Activated CD4-positive, alpha-beta T cell treated with anti-CD3 and anti-CD28 coated beads for 36 hours (primary cell): ENCODE measurements at regions of chr22 and their contacts with region 1.

Region 1: GRCh38 chr22:30289134-30289979 is at the start of gene CASTOR1:
- DNase-seq: peak; percentile 93
- ATAC-seq: peak; percentile 88
- H3K4me3 Mint-ChIP-seq: peak within 1 kb of the TSS; percentile 72
- H3K27ac Mint-ChIP-seq: peak within 1 kb of the TSS; percentile 72
- H3K4me1 Mint-ChIP-seq: peaks cover 23% of the 10 kb centered on the region
- H3K27me3 Mint-ChIP-seq: no peaks in the 10 kb centered on the region
- total RNA-seq, gene CASTOR1: 1.6 to 2.2 TPM

Region 2: DNA sequence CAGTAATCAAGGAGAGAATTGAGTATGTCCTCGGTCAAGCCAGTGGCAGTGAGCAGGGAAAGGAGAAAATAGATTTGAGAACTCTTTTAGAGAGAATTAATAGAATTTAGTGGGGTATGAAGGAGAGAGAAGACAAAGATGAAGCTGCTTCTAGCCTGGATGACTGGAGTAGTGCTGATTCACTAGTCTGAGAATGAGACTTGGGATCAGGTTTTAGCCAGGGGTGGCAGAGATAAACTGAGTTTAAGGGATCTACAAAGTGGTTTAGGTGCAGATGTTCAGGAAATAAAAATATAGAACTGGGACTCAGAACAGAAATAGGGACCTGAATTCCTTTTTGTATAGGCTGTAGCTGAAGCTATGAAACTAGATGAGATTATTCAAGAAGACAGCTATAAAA is 191.5 kb before region 1 on chr22:
- CTCF ChIA-PET with region 1: interaction called, 60 read pairs
- POLR2A ChIA-PET with region 1: no interaction called
- intact Hi-C with region 1: no loop called
- DNase-seq: no peak
- ATAC-seq: no peak
- H3K4me3 Mint-ChIP-seq: no peak overlapping the region
- H3K27ac Mint-ChIP-seq: no peak overlapping the region
- H3K4me1 Mint-ChIP-seq: peaks cover 17% of the 10 kb centered on the region
- H3K27me3 Mint-ChIP-seq: no peaks in the 10 kb centered on the region

Region 3: DNA sequence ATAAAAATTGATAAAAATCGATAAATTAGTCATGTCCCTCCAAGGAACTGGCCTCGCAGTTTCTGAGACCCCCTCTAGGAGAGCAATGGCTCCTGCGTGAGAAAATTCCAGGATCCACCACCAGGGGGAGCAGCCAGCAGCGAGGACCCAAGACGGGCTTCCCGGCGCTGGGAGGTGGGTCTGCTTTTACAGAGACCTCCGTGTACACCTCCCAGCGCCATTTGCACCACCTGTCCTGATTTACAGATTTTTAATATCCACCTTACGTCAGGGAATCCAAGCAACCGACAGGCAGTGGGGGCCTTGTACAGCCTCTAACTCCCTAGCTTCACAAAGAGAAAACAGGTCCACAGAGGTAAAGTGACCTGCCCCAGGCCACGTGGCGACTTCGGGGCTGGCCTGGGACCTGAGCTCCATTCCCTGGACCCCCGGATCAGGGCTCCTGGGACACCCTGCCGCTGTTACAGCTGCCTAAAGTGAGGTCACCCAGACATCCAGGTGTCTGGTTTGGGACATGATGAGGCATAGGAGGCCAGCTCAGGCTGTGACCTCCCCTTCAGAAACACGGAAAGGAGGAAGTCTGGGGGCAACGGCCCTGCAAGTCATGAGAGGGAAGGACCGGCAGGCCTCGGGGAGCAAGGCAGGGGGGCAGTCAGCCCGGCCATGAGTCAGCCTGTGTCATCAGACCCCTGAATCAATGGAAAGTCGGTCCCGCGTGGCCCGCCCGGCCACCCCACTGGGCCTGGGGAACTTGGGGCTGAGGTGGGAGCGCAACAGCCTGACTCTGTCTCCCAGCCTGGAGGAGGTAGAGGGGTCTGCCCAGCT is 26.2 kb before region 1 on chr22:
- CTCF ChIA-PET with region 1: interaction called, 43 read pairs
- POLR2A ChIA-PET with region 1: no interaction called
- intact Hi-C with region 1: loop called (anchors 1 kb)
- DNase-seq: peak; percentile 88
- ATAC-seq: no peak
- H3K4me3 Mint-ChIP-seq: peak overlapping the region; percentile 62
- H3K27ac Mint-ChIP-seq: peak overlapping the region; percentile 51
- H3K4me1 Mint-ChIP-seq: peaks cover 33% of the 10 kb centered on the region
- H3K27me3 Mint-ChIP-seq: no peaks in the 10 kb centered on the region

Region 4: DNA sequence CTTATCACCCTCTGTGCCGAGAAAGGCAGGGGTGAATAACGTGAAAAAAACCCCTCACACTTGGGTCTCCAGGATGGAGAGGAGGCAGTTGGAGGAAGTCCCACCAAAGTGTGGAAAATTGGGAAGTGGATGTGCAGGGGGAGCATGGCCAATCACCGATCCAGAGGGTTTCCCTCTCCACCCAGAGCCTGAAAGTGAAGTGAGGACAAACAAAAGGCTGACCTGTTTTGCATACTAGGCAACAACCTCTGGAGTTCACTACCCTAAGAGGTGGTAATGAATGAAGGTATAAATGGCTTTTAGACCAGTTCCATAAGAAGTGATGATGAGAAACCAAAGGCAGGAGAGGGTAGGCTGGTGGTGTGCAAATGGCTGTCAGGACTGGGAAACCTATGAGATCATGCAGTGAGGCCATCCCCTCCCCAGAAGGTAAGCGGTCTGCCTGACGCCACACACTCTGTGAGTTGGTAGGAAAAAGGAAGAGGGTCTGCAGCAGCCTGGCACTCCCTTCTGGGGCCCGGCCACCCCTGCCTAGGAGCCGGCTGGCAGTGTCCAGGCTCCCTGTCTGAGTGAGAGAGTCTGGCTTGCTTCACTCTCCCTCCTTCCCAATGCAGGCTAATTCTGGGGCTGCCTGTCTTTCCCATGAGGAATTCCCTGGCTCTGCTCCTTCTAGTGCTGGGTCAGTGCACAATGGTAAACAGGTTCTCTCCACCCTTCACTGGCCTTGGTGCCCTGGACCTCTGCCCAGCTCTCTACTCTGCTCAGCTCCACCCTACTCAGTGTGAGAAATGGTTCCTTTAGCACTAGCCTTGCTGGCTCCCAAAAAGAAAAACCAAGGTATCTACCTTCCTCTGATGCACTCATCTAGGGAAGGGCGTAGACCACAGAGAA is 21.8 kb after region 1 on chr22:
- CTCF ChIA-PET with region 1: interaction called, 19 read pairs
- POLR2A ChIA-PET with region 1: no interaction called
- intact Hi-C with region 1: no loop called
- DNase-seq: no peak
- ATAC-seq: no peak
- H3K4me3 Mint-ChIP-seq: no peak overlapping the region
- H3K27ac Mint-ChIP-seq: peak overlapping the region; percentile 82
- H3K4me1 Mint-ChIP-seq: peaks cover 95% of the 10 kb centered on the region
- H3K27me3 Mint-ChIP-seq: no peaks in the 10 kb centered on the region

Region 5: DNA sequence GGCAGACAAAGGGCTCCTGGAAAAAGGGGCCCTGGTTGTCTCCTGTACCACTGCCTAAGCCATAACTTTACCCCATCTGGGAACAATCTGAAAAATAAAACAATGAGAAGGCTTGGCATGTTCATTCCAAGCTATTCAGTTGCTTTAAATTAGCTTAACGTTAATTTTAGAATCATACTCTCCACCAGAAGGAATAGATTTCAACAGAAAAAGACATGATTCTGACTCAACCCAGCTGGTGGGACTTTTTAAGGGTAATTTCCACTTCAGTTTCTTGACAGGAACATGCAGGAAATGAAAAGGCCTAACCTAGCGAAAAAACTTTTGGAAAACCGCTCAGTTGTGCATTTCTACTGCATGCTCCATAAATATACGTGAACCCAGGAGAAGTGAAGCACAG is 59.5 kb after region 1 on chr22:
- CTCF ChIA-PET with region 1: interaction called, 30 read pairs
- POLR2A ChIA-PET with region 1: no interaction called
- intact Hi-C with region 1: no loop called
- DNase-seq: no peak
- ATAC-seq: no peak
- H3K4me3 Mint-ChIP-seq: peak overlapping the region; percentile 47
- H3K27ac Mint-ChIP-seq: peak overlapping the region; percentile 90
- H3K4me1 Mint-ChIP-seq: peaks cover 86% of the 10 kb centered on the region
- H3K27me3 Mint-ChIP-seq: no peaks in the 10 kb centered on the region

Region 6: GRCh38 chr22:30396871-30397655 is 107.7 kb after region 1 on chr22 and contains the start of gene SEC14L2:
- CTCF ChIA-PET with region 1: interaction called, 202 read pairs
- POLR2A ChIA-PET with region 1: no interaction called
- intact Hi-C with region 1: no loop called
- DNase-seq: peak; percentile 84
- ATAC-seq: peak; percentile 91
- H3K4me3 Mint-ChIP-seq: peak within 1 kb of the TSS; percentile 83
- H3K27ac Mint-ChIP-seq: peak within 1 kb of the TSS; percentile 56
- H3K4me1 Mint-ChIP-seq: peaks cover 36% of the 10 kb centered on the region
- H3K27me3 Mint-ChIP-seq: no peaks in the 10 kb centered on the region
- total RNA-seq, gene SEC14L2: 13.8 to 18.2 TPM

Region 7: DNA sequence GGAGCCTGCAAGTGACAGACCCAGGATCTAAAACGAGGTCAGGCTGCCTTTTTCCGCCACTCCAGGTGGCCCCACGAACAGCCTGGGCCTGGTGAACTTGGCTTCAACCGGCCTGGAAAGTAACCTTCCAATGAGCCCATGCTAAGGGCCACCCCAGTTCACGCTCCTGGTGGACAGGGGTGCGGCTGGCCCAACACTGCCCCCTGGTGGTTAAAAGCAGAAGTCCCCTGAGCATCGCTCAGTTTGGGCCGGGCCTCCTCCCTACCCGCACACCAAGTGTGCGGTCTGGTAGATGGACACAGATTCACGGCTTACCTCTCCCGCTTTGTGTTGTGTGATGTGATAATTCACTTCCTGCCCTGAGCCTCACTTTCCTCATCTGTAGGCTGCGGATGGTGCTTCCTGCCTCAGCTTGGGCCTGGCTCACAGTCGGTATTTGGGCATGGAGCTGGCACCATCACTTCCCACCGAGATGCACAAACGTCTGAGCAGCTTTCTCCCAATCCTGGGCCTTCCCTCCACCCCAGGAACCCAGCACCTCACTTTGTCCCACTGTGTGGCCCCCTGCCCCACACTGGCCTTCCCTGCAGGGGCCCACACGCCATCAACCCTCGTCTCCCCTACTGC is 196.1 kb after region 1 on chr22:
- CTCF ChIA-PET with region 1: interaction called, 4 read pairs
- POLR2A ChIA-PET with region 1: no interaction called
- intact Hi-C with region 1: loop called (anchors 1 kb)
- DNase-seq: peak; percentile 86
- ATAC-seq: peak; percentile 100
- H3K4me3 Mint-ChIP-seq: no peak overlapping the region
- H3K27ac Mint-ChIP-seq: no peak overlapping the region
- H3K4me1 Mint-ChIP-seq: no peaks in the 10 kb centered on the region
- H3K27me3 Mint-ChIP-seq: no peaks in the 10 kb centered on the region